ENCODE measurements at regions of chr14 and their contacts with region 1.

Region 1: DNA sequence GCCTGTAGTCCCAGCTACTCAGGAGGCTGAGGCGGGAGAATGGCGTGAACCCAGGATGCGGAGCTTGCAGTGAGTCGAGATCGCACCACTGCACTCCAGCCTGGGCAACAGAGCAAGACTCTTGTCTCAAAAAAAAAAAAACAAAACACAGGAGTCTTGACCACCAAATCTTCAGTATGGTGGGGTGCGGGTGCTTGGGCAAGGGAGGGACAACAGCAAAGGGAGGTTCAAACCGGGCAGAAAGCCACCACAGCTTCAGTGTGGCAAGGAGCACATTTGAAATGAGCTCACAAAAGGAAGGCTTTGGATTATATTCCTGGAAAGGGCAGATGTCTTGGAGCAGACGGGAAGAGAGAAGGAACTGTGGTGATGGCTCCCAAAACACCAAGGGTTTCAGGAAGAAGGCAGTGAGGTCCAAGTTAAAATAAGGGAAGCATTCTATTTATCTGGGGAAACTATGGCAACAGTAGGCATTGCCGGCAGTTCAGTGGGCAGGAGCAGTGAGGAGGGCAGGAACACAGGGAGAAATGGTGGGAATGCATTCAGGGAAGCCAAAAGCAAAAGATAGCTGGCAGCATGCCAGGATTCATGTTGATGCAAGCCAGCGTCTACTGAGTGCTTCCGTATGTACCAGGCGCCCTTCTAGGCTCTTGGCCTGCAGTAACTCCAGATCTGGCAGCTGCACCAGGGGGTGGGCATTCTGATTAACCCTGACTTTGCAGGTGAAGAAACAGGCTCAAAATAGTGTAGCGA is 51.0 kb upstream of the SRSF5 start:
- DNase-seq: no peak
- H3K4me3 ChIP-seq: peak overlapping the region in 1 of 7 experiments; percentile 21
- H3K27ac ChIP-seq: no peak overlapping the region
- H3K4me1 ChIP-seq: peaks cover 8 to 50% (median 48%) of the 10 kb centered on the region in 4 experiments
- H3K27me3 ChIP-seq: no peaks in the 10 kb centered on the region

Region 2: DNA sequence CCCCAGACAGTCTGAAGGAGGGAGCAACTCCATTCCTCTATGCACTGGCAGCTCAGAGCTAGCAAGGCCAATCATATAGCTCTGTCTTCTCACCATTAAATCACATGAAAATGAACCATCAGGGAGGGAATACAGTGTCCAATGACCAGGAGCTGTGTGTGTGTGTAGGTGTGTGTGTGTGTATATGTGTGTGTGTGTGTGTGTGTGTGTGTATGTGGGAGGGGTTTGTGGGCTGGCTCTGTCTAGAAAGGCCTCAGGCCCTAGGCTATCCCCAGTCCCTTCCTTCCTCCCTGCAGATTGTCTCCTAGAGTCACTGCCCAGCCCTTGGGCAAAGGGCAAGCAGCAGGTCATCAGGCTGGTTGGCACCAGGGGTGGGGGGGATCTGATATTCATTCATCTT is 110.2 kb before region 1 on chr14:
- CTCF ChIA-PET with region 1: interaction called, 10 read pairs
- POLR2A ChIA-PET with region 1: interaction called, 3 read pairs
- DNase-seq: no peak
- H3K4me3 ChIP-seq: no peak overlapping the region
- H3K27ac ChIP-seq: no peak overlapping the region
- H3K4me1 ChIP-seq: peaks cover 1 to 11% (median 9%) of the 10 kb centered on the region in 4 experiments
- H3K27me3 ChIP-seq: no peaks in the 10 kb centered on the region

Region 3: GRCh38 chr14:69703047-69704039 is 12.6 kb before region 1 on chr14:
- CTCF ChIA-PET with region 1: interaction called, 11 read pairs
- POLR2A ChIA-PET with region 1: no interaction called
- DNase-seq: peak; percentile 69 to 84 (median 79)
- H3K4me3 ChIP-seq: peak overlapping the region in 4 of 7 experiments; percentile 23 to 56 (median 38)
- H3K27ac ChIP-seq: peak overlapping the region; percentile 71 to 90
- H3K4me1 ChIP-seq: peaks cover 37 to 87% (median 75%) of the 10 kb centered on the region in 4 experiments
- H3K27me3 ChIP-seq: no peaks in the 10 kb centered on the region